ENCODE measurements at regions of chr4 and their contacts with region 1.

Region 1: DNA sequence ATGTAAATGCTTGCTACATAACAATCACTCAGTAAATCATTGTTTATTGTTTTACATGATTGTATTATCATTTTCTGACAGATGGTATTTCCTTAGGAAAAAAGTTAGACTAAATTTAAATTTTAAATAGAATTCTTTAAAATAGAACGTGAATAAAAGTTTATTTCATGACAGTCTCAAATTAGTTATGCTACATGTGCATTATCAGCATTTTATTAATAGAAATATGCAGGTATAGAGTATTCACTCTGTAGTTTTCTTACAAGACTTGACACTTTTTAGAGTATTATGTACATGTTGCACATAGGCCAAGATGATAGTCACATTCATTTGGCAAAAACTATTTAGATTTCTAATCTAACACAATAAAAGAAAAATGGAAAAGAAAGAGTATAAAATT is 213.3 kb upstream of the SPRY1 start:
- DNase-seq: no peak
- ATAC-seq: no peak
- H3K4me3 Mint-ChIP-seq: no peak overlapping the region
- H3K27ac Mint-ChIP-seq: no peak overlapping the region
- H3K4me1 Mint-ChIP-seq: no peaks in the 10 kb centered on the region
- H3K27me3 Mint-ChIP-seq: no peaks in the 10 kb centered on the region

Region 2: DNA sequence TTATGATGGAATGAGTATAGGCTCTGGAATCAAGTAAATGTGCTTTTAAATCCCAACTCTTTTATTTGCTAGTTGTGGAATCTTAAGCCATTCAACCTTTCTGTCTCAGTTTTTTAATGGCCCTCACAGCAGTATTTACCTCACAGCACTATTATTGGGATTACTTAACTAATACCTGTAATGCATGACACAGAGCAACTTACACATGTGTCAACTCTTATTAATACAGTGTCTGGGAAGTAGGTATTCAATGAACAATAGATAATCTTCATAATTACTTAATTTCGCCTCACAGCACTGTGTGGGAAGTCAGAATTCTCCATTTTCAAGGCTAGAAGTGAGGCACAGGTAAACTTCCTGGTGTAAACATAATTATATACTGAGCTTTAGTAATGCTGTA is 111.2 kb before region 1 on chr4:
- CTCF ChIA-PET with region 1: no interaction called
- POLR2A ChIA-PET with region 1: no interaction called
- intact Hi-C with region 1: loop called in 1 of 2 experiments (anchors 1 kb)
- DNase-seq: no peak
- ATAC-seq: no peak
- H3K4me3 Mint-ChIP-seq: no peak overlapping the region
- H3K27ac Mint-ChIP-seq: no peak overlapping the region
- H3K4me1 Mint-ChIP-seq: no peaks in the 10 kb centered on the region
- H3K27me3 Mint-ChIP-seq: no peaks in the 10 kb centered on the region

Region 3: GRCh38 chr4:123168812-123169211 is 14.5 kb before region 1 on chr4:
- CTCF ChIA-PET with region 1: no interaction called
- POLR2A ChIA-PET with region 1: no interaction called
- intact Hi-C with region 1: no loop called
- DNase-seq: no peak
- ATAC-seq: no peak
- H3K4me3 Mint-ChIP-seq: no peak overlapping the region
- H3K27ac Mint-ChIP-seq: no peak overlapping the region
- H3K4me1 Mint-ChIP-seq: no peaks in the 10 kb centered on the region
- H3K27me3 Mint-ChIP-seq: no peaks in the 10 kb centered on the region